CD4-positive, alpha-beta T cell (primary cell): ENCODE measurements at regions of chr3 and their contacts with region 1.

Region 1: DNA sequence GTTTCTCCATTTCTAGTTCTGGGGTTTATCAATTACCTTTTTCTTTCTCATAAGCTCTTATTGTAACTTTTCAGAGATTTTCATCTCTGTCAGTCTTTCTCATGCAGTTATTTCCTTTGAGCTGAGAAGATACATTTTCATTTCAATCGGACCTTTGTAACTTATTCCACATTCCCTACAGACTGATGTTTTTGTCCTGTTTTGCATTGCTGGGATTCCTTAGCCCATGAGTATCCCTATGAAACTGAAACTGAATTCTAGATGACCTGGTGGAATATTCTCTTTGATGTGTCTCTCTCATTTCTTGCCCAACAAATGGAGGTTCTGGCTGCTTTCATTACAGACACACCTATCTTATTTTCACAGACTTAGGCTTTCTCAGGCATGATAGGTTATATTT is 10.5 kb upstream of the EPHA6 start:
- DNase-seq: no peak
- ATAC-seq: no peak
- H3K4me3 ChIP-seq: no peak overlapping the region
- H3K4me3 Mint-ChIP-seq: no peak overlapping the region
- H3K27ac ChIP-seq: no peak overlapping the region
- H3K27ac Mint-ChIP-seq: no peak overlapping the region
- H3K4me1 ChIP-seq: no peaks in the 10 kb centered on the region
- H3K4me1 Mint-ChIP-seq: no peaks in the 10 kb centered on the region
- H3K27me3 ChIP-seq: no peaks in the 10 kb centered on the region
- H3K27me3 Mint-ChIP-seq: no peaks in the 10 kb centered on the region
- CTCF ChIP-seq: no peak

Region 2: GRCh38 chr3:96756516-96756915 is 47.3 kb before region 1 on chr3:
- CTCF ChIA-PET with region 1: no interaction called
- POLR2A ChIA-PET with region 1: no interaction called
- intact Hi-C with region 1: loop called in 1 of 2 experiments (anchors 2 kb)
- DNase-seq: no peak
- ATAC-seq: no peak
- H3K4me3 ChIP-seq: no peak overlapping the region
- H3K4me3 Mint-ChIP-seq: no peak overlapping the region
- H3K27ac ChIP-seq: no peak overlapping the region
- H3K27ac Mint-ChIP-seq: no peak overlapping the region
- H3K4me1 ChIP-seq: no peaks in the 10 kb centered on the region
- H3K4me1 Mint-ChIP-seq: no peaks in the 10 kb centered on the region
- H3K27me3 ChIP-seq: no peaks in the 10 kb centered on the region
- H3K27me3 Mint-ChIP-seq: no peaks in the 10 kb centered on the region
- CTCF ChIP-seq: no peak

Region 3: GRCh38 chr3:97043411-97043810 is 239.6 kb after region 1 on chr3:
- CTCF ChIA-PET with region 1: no interaction called
- POLR2A ChIA-PET with region 1: no interaction called
- intact Hi-C with region 1: no loop called
- DNase-seq: no peak
- ATAC-seq: no peak
- H3K4me3 ChIP-seq: no peak overlapping the region
- H3K4me3 Mint-ChIP-seq: no peak overlapping the region
- H3K27ac ChIP-seq: no peak overlapping the region
- H3K27ac Mint-ChIP-seq: no peak overlapping the region
- H3K4me1 ChIP-seq: no peaks in the 10 kb centered on the region
- H3K4me1 Mint-ChIP-seq: no peaks in the 10 kb centered on the region
- H3K27me3 ChIP-seq: no peaks in the 10 kb centered on the region
- H3K27me3 Mint-ChIP-seq: no peaks in the 10 kb centered on the region
- CTCF ChIP-seq: no peak